Brain microvascular endothelial cell (primary cell): ENCODE measurements at regions of chr2 and their contacts with region 1.

Region 1: DNA sequence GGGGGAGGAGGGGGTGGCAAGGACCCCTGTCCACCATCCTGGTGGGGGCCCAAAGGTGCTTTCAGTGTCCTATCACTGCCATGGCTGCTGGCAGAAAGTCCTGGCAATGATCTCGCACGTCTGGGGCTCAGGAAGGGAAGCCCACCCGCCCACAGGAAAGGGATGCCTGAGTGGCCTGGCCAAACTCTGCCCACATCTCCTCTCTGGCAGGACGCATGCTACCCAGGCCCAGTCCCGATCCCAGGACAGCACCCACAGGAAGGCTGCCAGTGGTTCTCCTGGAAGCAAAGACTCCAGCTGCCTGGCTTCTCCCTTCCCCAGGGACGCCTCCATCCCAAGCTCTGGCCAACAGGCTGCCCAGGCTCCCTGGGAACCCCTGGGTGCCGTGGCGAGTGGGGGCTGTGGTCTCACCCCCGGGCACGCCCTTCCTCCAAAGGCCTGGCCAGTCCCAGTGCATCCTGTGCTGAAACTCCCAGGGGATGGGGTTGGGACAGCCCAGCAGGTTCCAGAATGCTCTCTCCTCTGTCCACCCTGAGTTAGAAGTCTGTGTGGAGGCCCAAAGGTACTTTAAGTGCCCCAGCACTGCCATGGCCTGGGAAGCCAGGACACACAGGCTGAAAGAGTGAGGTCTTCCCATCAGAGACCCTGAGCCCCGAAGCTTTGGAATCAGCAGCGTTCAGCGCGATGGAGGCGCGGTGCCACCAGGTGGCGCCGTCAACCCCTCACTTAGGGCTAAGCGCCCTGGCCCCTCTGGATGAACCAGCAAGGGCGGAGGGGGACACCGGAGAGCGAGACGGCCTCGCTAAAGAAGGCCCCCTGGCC is 29.8 kb upstream of the TAF1B start:
- DNase-seq: peak; percentile 34
- H3K4me3 ChIP-seq: peak overlapping the region; percentile 24
- H3K27ac ChIP-seq: no peak overlapping the region
- H3K27me3 ChIP-seq: no peaks in the 10 kb centered on the region
- CTCF ChIP-seq: peak; percentile 97

Region 2: DNA sequence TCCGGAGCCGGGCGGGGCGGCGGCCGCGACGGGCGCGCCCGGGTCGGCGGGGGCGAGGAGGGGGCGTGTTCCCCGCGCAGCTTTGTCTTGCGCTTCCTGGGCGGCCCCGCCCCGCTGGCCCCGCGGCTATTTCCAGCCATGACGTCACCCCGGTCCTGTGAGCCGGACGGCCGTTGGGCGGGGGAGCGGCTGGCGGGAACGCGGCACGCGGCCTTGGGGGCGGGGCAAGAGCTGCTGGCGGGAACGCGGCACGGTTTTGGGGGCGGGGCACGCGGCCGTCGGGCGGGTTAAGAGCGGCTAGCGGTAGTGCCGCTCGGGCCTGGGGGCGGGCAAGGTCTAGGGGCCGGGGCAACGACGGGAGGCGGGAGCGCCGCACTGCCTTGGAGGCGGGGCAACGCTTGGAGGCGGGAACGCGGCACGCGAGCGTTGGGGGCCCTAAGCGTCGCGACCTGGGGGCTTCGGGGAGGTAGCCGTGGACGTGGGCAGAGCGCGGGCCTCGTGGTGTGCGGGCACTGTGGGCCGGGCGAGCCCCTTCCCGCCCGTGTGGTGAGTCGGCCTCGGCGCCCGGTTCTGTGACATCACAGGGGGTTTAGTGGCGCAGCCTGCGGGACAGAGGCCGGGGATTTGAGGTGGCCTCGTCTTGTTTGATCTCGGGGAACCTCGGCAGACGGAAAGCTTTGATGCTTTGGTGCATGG is 230.5 kb after region 1 on chr2:
- in situ Hi-C with region 1: loop called (anchors 10 kb)
- DNase-seq: peak; percentile 86
- H3K4me3 ChIP-seq: peak overlapping the region; percentile 57
- H3K27ac ChIP-seq: peak overlapping the region; percentile 61
- H3K27me3 ChIP-seq: no peaks in the 10 kb centered on the region
- CTCF ChIP-seq: no peak